ENCODE measurements at regions of chr6 and their contacts with region 1.

Region 1: GRCh38 chr6:108835218-108835850 is 12.9 kb upstream of the ARMC2 start:
- H3K4me3 Mint-ChIP-seq: no peak overlapping the region
- H3K27ac Mint-ChIP-seq: no peak overlapping the region
- H3K4me1 Mint-ChIP-seq: peaks cover 39% of the 10 kb centered on the region
- H3K27me3 Mint-ChIP-seq: peaks cover 59% of the 10 kb centered on the region

Region 2: GRCh38 chr6:108541838-108542759 is 293.2 kb before region 1 on chr6:
- intact Hi-C with region 1: loop called (anchors 1 kb)
- H3K4me3 Mint-ChIP-seq: no peak overlapping the region
- H3K27ac Mint-ChIP-seq: no peak overlapping the region
- H3K4me1 Mint-ChIP-seq: peaks cover 26% of the 10 kb centered on the region
- H3K27me3 Mint-ChIP-seq: peaks cover 13% of the 10 kb centered on the region

Region 3: DNA sequence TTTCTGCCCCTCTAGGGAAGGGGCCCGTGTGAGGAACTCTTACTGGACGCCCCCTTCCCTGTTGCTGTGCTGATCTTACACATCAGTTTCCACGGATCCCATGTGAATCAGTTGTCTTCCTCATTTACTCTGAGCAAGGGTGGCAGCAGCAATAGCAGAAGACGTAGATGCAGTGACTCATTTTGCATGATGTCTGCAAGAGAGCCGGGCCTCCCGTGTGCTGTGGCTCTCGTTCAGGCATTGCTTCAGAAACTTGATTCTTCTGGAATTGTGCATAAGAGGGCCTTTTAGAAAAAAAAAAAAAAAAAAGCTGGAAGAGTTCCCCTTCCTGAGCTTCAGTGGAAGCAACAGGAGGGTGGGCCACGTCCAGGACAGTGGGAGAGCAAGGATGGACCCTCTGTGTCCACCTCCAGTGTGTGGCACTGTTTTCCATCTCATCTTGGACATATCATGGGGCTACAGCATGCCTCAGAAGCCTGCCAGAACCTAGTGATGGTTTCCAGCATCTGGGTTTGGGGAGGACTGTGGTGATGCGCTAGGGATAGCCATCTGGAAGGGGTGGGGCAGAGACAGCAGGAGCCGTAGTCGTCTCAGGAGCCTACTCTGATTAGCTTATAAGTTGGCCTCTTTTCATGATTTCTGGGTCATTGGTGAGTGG is 212.6 kb before region 1 on chr6:
- intact Hi-C with region 1: loop called (anchors 10 kb)
- H3K4me3 Mint-ChIP-seq: peak overlapping the region; percentile 77
- H3K27ac Mint-ChIP-seq: peak overlapping the region; percentile 89
- H3K4me1 Mint-ChIP-seq: peaks cover 53% of the 10 kb centered on the region
- H3K27me3 Mint-ChIP-seq: no peaks in the 10 kb centered on the region

Region 4: DNA sequence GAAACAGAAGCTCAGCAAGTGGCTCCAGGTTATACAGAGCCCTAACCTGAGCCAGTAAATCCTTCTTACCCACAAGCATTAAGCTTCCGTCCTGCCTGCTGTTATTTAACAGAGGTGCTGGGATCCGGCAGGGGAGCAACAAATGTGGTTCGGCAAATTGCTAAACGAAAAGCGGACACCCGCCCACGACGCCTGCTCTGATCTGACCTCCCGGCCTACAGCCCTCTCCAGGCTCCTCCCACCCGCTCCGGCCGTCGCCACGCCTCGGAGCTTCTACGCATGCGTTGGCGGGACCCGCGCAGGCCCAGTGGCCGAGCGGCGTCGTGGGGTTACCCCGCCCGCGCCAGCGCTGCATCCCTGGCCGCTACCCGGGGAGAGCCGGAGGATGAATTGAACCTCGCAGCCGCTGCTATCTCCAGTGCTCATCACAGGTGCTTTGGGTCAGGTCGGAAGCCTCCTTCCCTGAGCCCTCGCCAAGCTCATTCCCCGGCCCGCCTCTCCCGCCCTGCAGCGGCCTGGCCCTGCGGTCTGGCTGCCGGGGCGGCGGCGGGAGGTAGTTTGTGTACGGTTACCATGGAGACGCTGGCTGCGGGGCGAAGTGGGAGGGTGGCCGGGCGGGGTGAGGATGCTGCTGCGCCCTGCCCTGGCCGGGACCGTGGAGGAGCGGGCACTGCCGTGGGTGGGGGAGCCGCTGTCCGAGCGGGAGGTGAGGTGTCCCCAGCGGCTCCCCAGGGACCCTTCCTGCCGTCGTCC is 13.0 kb after region 1 on chr6 and contains the start of gene ARMC2:
- intact Hi-C with region 1: loop called (anchors 1 kb)
- H3K4me3 Mint-ChIP-seq: peak within 1 kb of the TSS; percentile 85
- H3K27ac Mint-ChIP-seq: peak within 1 kb of the TSS; percentile 84
- H3K4me1 Mint-ChIP-seq: peaks cover 52% of the 10 kb centered on the region
- H3K27me3 Mint-ChIP-seq: peaks cover 8% of the 10 kb centered on the region

Region 5: GRCh38 chr6:108896111-108896661 is 60.9 kb after region 1 on chr6:
- intact Hi-C with region 1: loop called (anchors 1 kb)
- H3K4me3 Mint-ChIP-seq: no peak overlapping the region
- H3K27ac Mint-ChIP-seq: peak overlapping the region; percentile 76
- H3K4me1 Mint-ChIP-seq: peaks cover 26% of the 10 kb centered on the region
- H3K27me3 Mint-ChIP-seq: peaks cover 7% of the 10 kb centered on the region